Tibial artery (tissue), 4 donors: ENCODE measurements at regions of chr19 and their contacts with region 1.

Region 1: DNA sequence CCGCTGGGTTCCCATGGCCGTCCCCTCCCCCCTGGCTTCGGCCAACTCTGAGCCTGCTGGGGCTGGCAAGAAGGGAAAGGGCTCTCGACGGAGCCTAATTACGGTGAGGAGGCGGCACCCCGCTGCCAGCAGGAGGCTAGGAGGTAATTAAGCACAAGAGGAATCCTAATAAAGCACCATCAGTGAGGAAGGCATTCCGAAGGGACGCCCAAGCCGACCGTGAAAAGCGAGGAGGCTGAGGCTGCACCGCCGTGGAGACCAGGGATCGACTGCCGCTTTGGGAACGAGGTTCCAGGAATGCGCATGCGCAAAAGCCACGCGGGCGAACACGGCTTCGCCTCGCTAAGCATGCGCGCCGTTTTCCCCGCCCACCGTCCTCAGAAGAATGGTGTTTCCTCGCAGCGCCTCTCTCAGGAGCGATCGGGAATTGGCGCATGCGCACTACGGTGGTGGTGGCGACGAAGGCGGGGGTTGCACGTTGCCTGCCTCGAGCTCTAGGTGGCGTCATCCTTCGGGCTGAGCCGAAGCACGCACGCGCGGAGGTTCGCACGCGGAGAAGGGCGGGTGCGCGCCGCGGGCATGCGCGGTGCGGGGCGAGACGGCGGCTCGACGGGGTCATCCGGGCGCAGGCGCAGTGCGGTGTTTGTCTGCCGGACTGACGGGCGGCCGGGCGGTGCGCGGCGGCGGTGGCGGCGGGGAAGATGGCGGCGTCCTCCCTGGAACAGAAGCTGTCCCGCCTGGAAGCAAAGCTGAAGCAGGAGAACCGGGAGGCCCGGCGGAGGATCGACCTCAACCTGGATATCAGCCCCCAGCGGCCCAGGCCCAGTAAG is at the start of gene MAP2K7:
- DNase-seq: peak; percentile 99 to 100
- H3K4me3 ChIP-seq: peak within 1 kb of the TSS; percentile 76 to 79
- H3K27ac ChIP-seq: peak within 1 kb of the TSS; percentile 82 to 84
- H3K4me1 ChIP-seq: peaks cover 0 to 49% (median 35%) of the 10 kb centered on the region in 4 donors
- H3K27me3 ChIP-seq: peaks cover 0 to 11% of the 10 kb centered on the region in 2 donors
- CTCF ChIP-seq: peak; percentile 33 to 38

Region 2: DNA sequence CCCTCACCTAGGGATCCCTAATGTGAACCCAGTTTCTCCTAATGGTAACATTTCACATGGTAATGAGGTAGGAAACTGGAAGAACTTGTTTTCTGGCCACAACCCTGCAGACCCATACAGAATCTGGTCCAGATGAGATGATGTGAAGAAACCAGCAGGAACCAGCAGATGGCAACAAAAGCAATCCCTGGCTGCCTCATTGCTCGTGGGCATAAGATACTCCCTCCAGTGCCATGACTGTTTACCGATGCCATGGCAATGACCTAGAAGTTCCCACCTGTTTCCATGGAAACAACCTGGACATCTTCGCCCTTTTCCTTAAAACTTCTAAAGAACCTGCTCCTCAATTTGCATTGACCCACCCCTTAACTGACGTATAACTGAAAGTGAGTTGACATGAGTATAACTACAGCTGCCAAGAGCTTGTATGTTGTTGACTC is 154.7 kb before region 1 on chr19:
- intact Hi-C with region 1: no loop called
- DNase-seq: no peak
- H3K4me3 ChIP-seq: no peak overlapping the region
- H3K27ac ChIP-seq: no peak overlapping the region
- H3K4me1 ChIP-seq: no peaks in the 10 kb centered on the region
- H3K27me3 ChIP-seq: peaks cover 0 to 20% of the 10 kb centered on the region in 2 donors
- CTCF ChIP-seq: no peak

Region 3: GRCh38 chr19:7852851-7853769 is 50.3 kb before region 1 on chr19:
- intact Hi-C with region 1: loop called (anchors 5 kb)
- DNase-seq: no peak
- H3K4me3 ChIP-seq: no peak overlapping the region
- H3K27ac ChIP-seq: no peak overlapping the region
- H3K4me1 ChIP-seq: peaks cover 0 to 8% (median 0%) of the 10 kb centered on the region in 4 donors
- H3K27me3 ChIP-seq: peaks cover 0 to 10% of the 10 kb centered on the region in 2 donors
- CTCF ChIP-seq: peak; percentile 61 to 76

Region 4: GRCh38 chr19:8017808-8018207 is 114.3 kb after region 1 on chr19:
- intact Hi-C with region 1: no loop called
- DNase-seq: no peak
- H3K4me3 ChIP-seq: no peak overlapping the region
- H3K27ac ChIP-seq: no peak overlapping the region
- H3K4me1 ChIP-seq: no peaks in the 10 kb centered on the region
- H3K27me3 ChIP-seq: no peaks in the 10 kb centered on the region
- CTCF ChIP-seq: no peak